CD8-positive, alpha-beta T cell (primary cell): ENCODE measurements at regions of chr2 and their contacts with region 1.

Region 1: DNA sequence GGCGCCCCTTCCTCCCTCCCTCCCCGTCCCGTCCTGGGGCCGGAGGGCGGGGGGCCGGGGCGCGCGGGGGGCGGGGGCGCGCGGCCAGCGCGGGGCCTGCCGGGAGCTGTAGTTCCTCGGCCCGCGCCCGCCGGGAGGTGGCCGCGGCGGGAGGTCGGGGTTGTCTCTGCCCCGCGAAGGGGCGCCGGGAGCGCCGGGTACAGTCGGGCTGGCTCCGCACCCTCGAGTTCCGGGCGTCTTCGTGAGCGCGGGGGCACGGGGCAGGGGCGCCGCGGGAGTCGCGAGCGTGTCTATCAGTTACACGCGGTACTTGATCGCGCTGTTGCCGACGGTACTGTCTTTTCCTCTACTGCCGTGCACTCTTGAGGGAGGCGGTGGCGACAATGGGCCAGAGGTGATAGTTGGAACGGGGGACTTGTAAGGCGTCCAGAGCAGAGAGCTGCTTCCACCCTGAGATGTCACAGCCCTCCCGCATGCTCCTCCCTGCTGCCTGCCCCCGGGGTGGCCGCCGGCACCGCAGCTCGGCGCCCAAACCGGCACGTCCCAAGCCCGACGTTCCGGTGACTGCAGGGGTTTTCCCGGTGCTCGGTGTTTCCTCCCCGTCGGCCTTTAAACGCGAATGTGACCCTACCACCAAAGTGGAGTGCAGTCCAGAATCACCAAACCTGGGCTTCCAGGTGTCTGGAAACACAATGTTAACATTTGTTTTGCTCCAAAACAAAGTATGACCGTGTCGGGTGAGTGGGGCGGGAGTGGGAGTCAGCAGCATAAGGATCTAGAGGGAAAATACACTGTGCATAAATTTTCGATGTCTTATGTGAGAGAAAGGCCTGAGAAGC is at the start of gene PRKD3:
- DNase-seq: peak in 8 of 9 experiments; percentile 13 to 84 (median 58)
- ATAC-seq: peak; percentile 75
- H3K4me3 ChIP-seq: peak within 1 kb of the TSS; percentile 81 to 84
- H3K4me3 Mint-ChIP-seq: peak within 1 kb of the TSS; percentile 98
- H3K27ac ChIP-seq: peak within 1 kb of the TSS; percentile 68 to 71
- H3K27ac Mint-ChIP-seq: peak within 1 kb of the TSS; percentile 97
- H3K4me1 ChIP-seq: peaks cover 25% of the 10 kb centered on the region
- H3K4me1 Mint-ChIP-seq: peaks cover 35% of the 10 kb centered on the region
- H3K27me3 ChIP-seq: peaks cover 0 to 8% of the 10 kb centered on the region in 2 experiments
- H3K27me3 Mint-ChIP-seq: peaks cover 3% of the 10 kb centered on the region
- CTCF ChIP-seq: no peak
- total RNA-seq, gene PRKD3: 37.2 to 43.8 TPM

Region 2: GRCh38 chr2:37083873-37084794 is 240.9 kb before region 1 on chr2 and contains the starts of genes GPATCH11 and HEATR5B:
- CTCF ChIA-PET with region 1: no interaction called
- POLR2A ChIA-PET with region 1: no interaction called
- intact Hi-C with region 1: loop called (anchors 2 kb)
- DNase-seq: peak; percentile 73 to 97 (median 92)
- ATAC-seq: peak; percentile 84
- H3K4me3 ChIP-seq: peak within 1 kb of the TSS; percentile 76 to 99
- H3K4me3 Mint-ChIP-seq: no peak within 1 kb of the TSS
- H3K27ac ChIP-seq: peak within 1 kb of the TSS; percentile 67 to 85
- H3K27ac Mint-ChIP-seq: peak within 1 kb of the TSS; percentile 14
- H3K4me1 ChIP-seq: peaks cover 51% of the 10 kb centered on the region
- H3K4me1 Mint-ChIP-seq: peaks cover 50% of the 10 kb centered on the region
- H3K27me3 ChIP-seq: no peaks in the 10 kb centered on the region
- H3K27me3 Mint-ChIP-seq: no peaks in the 10 kb centered on the region
- CTCF ChIP-seq: no peak
- total RNA-seq, gene GPATCH11: 5.4 to 6.4 TPM
- total RNA-seq, gene HEATR5B: 9.9 to 11.0 TPM

Region 3: GRCh38 chr2:37196320-37197195 is 128.4 kb before region 1 on chr2 and contains the start of gene CEBPZOS:
- CTCF ChIA-PET with region 1: no interaction called
- POLR2A ChIA-PET with region 1: no interaction called
- intact Hi-C with region 1: loop called in 1 of 2 experiments (anchors 2 kb)
- DNase-seq: peak; percentile 81 to 96 (median 91)
- ATAC-seq: peak; percentile 89
- H3K4me3 ChIP-seq: peak within 1 kb of the TSS; percentile 74 to 78
- H3K4me3 Mint-ChIP-seq: peak within 1 kb of the TSS; percentile 96
- H3K27ac ChIP-seq: peak within 1 kb of the TSS; percentile 74 to 78
- H3K27ac Mint-ChIP-seq: peak within 1 kb of the TSS; percentile 96
- H3K4me1 ChIP-seq: peaks cover 24% of the 10 kb centered on the region
- H3K4me1 Mint-ChIP-seq: peaks cover 35% of the 10 kb centered on the region
- H3K27me3 ChIP-seq: no peaks in the 10 kb centered on the region
- H3K27me3 Mint-ChIP-seq: no peaks in the 10 kb centered on the region
- CTCF ChIP-seq: no peak
- total RNA-seq, gene CEBPZOS: 17.5 to 18.2 TPM

Region 4: GRCh38 chr2:37287966-37288365 is 37.0 kb before region 1 on chr2:
- CTCF ChIA-PET with region 1: no interaction called
- POLR2A ChIA-PET with region 1: interaction called, 3 read pairs
- intact Hi-C with region 1: loop called in 1 of 2 experiments (anchors 5 kb)
- DNase-seq: peak in 2 of 9 experiments; percentile 28 to 34
- ATAC-seq: no peak
- H3K4me3 ChIP-seq: no peak overlapping the region
- H3K4me3 Mint-ChIP-seq: no peak overlapping the region
- H3K27ac ChIP-seq: no peak overlapping the region
- H3K27ac Mint-ChIP-seq: no peak overlapping the region
- H3K4me1 ChIP-seq: no peaks in the 10 kb centered on the region
- H3K4me1 Mint-ChIP-seq: no peaks in the 10 kb centered on the region
- H3K27me3 ChIP-seq: no peaks in the 10 kb centered on the region
- H3K27me3 Mint-ChIP-seq: no peaks in the 10 kb centered on the region
- CTCF ChIP-seq: no peak

Region 5: DNA sequence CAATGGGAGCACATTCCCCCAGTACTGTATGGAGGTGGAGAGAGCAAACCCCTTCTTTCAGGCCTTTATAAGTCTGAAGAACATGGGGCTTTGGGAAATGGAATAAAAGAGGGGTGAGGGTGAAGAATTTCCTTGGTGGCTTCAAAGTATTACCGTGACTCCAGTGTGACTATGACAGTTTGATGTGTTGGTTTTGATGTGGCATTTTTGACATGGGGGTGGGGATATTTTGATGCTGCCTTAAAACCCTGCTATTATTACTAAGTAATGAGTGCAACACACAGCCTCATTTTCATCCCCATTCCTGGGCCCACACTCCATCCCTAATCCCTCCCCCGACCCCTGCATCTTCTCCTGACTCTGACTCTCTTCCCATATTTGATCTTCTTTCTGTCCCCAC is 43.0 kb after region 1 on chr2:
- CTCF ChIA-PET with region 1: no interaction called
- POLR2A ChIA-PET with region 1: no interaction called
- intact Hi-C with region 1: loop called in 1 of 2 experiments (anchors 2 kb)
- DNase-seq: peak in 2 of 9 experiments; percentile 29 to 57
- ATAC-seq: peak; percentile 54
- H3K4me3 ChIP-seq: no peak overlapping the region
- H3K4me3 Mint-ChIP-seq: no peak overlapping the region
- H3K27ac ChIP-seq: no peak overlapping the region
- H3K27ac Mint-ChIP-seq: no peak overlapping the region
- H3K4me1 ChIP-seq: peaks cover 26% of the 10 kb centered on the region
- H3K4me1 Mint-ChIP-seq: peaks cover 12% of the 10 kb centered on the region
- H3K27me3 ChIP-seq: no peaks in the 10 kb centered on the region
- H3K27me3 Mint-ChIP-seq: peaks cover 28% of the 10 kb centered on the region
- CTCF ChIP-seq: no peak

Region 6: DNA sequence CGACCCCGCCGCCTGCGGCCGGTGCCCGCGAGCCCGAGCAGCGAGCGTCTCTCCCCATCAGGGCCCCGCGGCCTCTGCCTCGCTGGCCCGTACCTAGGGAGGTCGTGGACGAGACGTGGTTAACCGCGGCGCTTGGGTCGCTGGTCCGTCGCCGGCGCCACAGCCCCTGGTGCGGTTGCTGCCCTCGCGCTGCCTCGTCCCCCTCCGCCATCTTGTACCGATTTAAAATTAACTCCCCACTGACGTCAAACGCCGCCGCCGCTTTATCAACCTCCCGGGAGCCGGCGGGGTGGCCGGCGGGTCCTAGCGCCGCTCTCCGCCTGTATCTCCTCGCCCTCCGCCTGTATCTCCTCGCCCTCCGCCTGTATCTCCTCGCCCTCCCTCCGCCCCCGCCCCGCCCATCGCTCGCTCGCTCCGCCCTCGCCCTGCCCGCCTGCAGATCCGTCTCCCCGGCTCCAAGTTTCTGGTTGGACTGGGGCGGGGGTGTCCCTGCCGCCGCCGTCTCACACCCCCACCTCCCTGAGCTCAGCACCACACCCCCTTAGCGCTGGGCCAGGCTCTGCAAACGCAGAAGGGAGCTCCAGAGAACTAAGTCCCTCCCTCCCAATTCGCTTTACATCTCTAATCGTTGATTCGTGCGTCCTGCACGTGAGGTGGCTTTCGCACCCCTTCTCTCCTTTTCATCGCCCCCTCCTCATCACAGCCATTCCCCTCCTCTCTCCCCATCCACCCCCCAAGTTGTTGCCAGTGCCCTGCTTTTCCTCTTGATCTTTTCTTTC is 1052.2 kb after region 1 on chr2 and contains the start of gene ATL2:
- CTCF ChIA-PET with region 1: no interaction called
- POLR2A ChIA-PET with region 1: no interaction called
- intact Hi-C with region 1: loop called in 1 of 2 experiments (anchors 10 kb)
- DNase-seq: peak; percentile 87 to 96 (median 93)
- ATAC-seq: peak; percentile 80
- H3K4me3 ChIP-seq: peak within 1 kb of the TSS; percentile 71 to 93
- H3K4me3 Mint-ChIP-seq: peak within 1 kb of the TSS; percentile 97
- H3K27ac ChIP-seq: peak within 1 kb of the TSS; percentile 84 to 91
- H3K27ac Mint-ChIP-seq: peak within 1 kb of the TSS; percentile 96
- H3K4me1 ChIP-seq: peaks cover 35% of the 10 kb centered on the region
- H3K4me1 Mint-ChIP-seq: peaks cover 69% of the 10 kb centered on the region
- H3K27me3 ChIP-seq: no peaks in the 10 kb centered on the region
- H3K27me3 Mint-ChIP-seq: no peaks in the 10 kb centered on the region
- CTCF ChIP-seq: no peak
- total RNA-seq, gene ATL2: 76.4 to 88.2 TPM